ENCODE measurements at regions of chr20 and their contacts with region 1.

Region 1: GRCh38 chr20:34709831-34710567 is 5.9 kb downstream of the TP53INP2 start:
- DNase-seq: no peak
- H3K4me3 ChIP-seq: peak overlapping the region; percentile 39 to 74 (median 55)
- H3K27ac ChIP-seq: no peak overlapping the region
- H3K4me1 ChIP-seq: peaks cover 40% of the 10 kb centered on the region
- H3K27me3 ChIP-seq: no peaks in the 10 kb centered on the region
- CTCF ChIP-seq: peak in 1 of 2 donors; percentile 29

Region 2: GRCh38 chr20:34532406-34532719 is 177.6 kb before region 1 on chr20:
- CTCF ChIA-PET with region 1: no interaction called
- dilution Hi-C with region 1: loop called (anchors 5 kb)
- in situ Hi-C with region 1: no loop called
- intact Hi-C with region 1: no loop called
- DNase-seq: no peak
- H3K4me3 ChIP-seq: no peak overlapping the region
- H3K27ac ChIP-seq: no peak overlapping the region
- H3K4me1 ChIP-seq: no peaks in the 10 kb centered on the region
- H3K27me3 ChIP-seq: no peaks in the 10 kb centered on the region
- CTCF ChIP-seq: no peak

Region 3: GRCh38 chr20:34558320-34559218 is 151.4 kb before region 1 on chr20 and contains the start of gene MAP1LC3A:
- CTCF ChIA-PET with region 1: no interaction called
- dilution Hi-C with region 1: loop called (anchors 5 kb)
- in situ Hi-C with region 1: no loop called
- intact Hi-C with region 1: no loop called
- DNase-seq: peak; percentile 79
- H3K4me3 ChIP-seq: peak within 1 kb of the TSS; percentile 55 to 73 (median 60)
- H3K27ac ChIP-seq: peak within 1 kb of the TSS; percentile 39
- H3K4me1 ChIP-seq: peaks cover 7% of the 10 kb centered on the region
- H3K27me3 ChIP-seq: no peaks in the 10 kb centered on the region
- CTCF ChIP-seq: no peak
- total RNA-seq, gene MAP1LC3A: 9.4 to 18.5 TPM

Region 4: GRCh38 chr20:34621383-34622367 is 88.3 kb before region 1 on chr20:
- CTCF ChIA-PET with region 1: no interaction called
- dilution Hi-C with region 1: loop called (anchors 5 kb)
- in situ Hi-C with region 1: no loop called
- intact Hi-C with region 1: no loop called
- DNase-seq: peak; percentile 64
- H3K4me3 ChIP-seq: no peak overlapping the region
- H3K27ac ChIP-seq: peak overlapping the region; percentile 13
- H3K4me1 ChIP-seq: peaks cover 7% of the 10 kb centered on the region
- H3K27me3 ChIP-seq: no peaks in the 10 kb centered on the region
- CTCF ChIP-seq: no peak

Measured in mammary epithelial cell (primary cell).